ENCODE measurements at regions of chr13 and their contacts with region 1.

Region 1: GRCh38 chr13:40666045-40666904 is at the start of gene FOXO1:
- DNase-seq: peak; percentile 94
- ATAC-seq: peak; percentile 69
- H3K4me3 ChIP-seq: peak within 1 kb of the TSS; percentile 67 to 95 (median 84)
- H3K4me3 Mint-ChIP-seq: peak within 1 kb of the TSS; percentile 97
- H3K27ac ChIP-seq: peak within 1 kb of the TSS; percentile 77 to 91
- H3K27ac Mint-ChIP-seq: peak within 1 kb of the TSS; percentile 98
- H3K4me1 ChIP-seq: peaks cover 30 to 32% of the 10 kb centered on the region in 2 donors
- H3K4me1 Mint-ChIP-seq: peaks cover 38% of the 10 kb centered on the region
- H3K27me3 ChIP-seq: no peaks in the 10 kb centered on the region
- H3K27me3 Mint-ChIP-seq: no peaks in the 10 kb centered on the region
- CTCF ChIP-seq: no peak
- total RNA-seq, gene FOXO1: 77.9 and 83.1 TPM in 2 replicates

Region 2: DNA sequence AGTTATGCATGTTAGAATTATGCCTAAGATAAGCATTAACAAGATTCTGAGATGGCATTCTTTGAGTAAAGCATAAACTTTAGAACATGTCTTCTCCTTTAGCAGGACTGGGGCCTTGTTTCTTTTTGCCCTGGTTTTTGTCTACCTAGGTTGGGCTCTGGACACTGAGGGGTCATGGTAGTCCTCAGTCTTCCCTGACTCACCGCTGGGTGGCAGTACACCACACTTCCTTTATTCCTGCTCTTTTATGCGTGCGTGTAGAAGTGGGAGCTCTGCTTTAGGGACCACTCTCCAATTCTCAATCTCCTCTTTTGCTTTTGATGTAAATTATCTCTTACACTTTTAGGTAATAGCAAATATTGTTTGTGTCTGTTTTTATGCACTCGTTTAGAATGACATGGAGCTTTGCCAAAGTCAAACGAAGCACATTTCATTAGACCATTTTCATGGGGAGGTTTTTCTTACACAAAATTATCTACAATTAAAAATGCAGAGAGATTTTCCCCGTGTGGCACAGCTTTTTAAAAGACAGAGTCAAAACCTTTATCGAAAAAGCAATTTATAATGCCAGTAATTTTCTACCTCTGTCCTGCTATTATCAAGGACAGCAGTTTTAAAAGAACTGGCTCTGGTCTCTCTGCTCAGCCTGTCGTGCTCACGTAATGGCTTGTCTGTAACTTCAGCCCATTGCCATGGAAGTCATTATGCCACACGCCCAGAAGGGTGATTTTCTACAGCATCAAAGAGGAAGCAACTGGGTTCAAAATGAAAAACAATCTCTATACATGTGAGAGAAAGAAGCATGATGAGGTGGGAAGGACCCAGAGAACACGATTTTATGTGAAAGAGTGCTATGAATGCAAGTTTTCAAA is 596.9 kb before region 1 on chr13:
- CTCF ChIA-PET with region 1: interaction called, 27 read pairs
- POLR2A ChIA-PET with region 1: interaction called, 4 read pairs
- intact Hi-C with region 1: loop called (anchors 5 kb)
- DNase-seq: peak; percentile 79
- ATAC-seq: peak; percentile 95
- H3K4me3 ChIP-seq: no peak overlapping the region
- H3K4me3 Mint-ChIP-seq: no peak overlapping the region
- H3K27ac ChIP-seq: no peak overlapping the region
- H3K27ac Mint-ChIP-seq: no peak overlapping the region
- H3K4me1 ChIP-seq: peaks cover 10 to 13% of the 10 kb centered on the region in 2 donors
- H3K4me1 Mint-ChIP-seq: peaks cover 11% of the 10 kb centered on the region
- H3K27me3 ChIP-seq: no peaks in the 10 kb centered on the region
- H3K27me3 Mint-ChIP-seq: no peaks in the 10 kb centered on the region
- CTCF ChIP-seq: peak; percentile 82

Region 3: GRCh38 chr13:40401911-40402776 is 264.1 kb before region 1 on chr13:
- CTCF ChIA-PET with region 1: no interaction called
- POLR2A ChIA-PET with region 1: interaction called, 9 read pairs
- intact Hi-C with region 1: loop called (anchors 1 kb)
- DNase-seq: peak; percentile 56
- ATAC-seq: peak; percentile 99
- H3K4me3 ChIP-seq: peak overlapping the region in 3 of 5 experiments; percentile 16 to 33 (median 32)
- H3K4me3 Mint-ChIP-seq: peak overlapping the region; percentile 75
- H3K27ac ChIP-seq: no peak overlapping the region
- H3K27ac Mint-ChIP-seq: peak overlapping the region; percentile 75
- H3K4me1 ChIP-seq: peaks cover 15 to 18% of the 10 kb centered on the region in 2 donors
- H3K4me1 Mint-ChIP-seq: peaks cover 29% of the 10 kb centered on the region
- H3K27me3 ChIP-seq: no peaks in the 10 kb centered on the region
- H3K27me3 Mint-ChIP-seq: no peaks in the 10 kb centered on the region
- CTCF ChIP-seq: no peak

Region 4: DNA sequence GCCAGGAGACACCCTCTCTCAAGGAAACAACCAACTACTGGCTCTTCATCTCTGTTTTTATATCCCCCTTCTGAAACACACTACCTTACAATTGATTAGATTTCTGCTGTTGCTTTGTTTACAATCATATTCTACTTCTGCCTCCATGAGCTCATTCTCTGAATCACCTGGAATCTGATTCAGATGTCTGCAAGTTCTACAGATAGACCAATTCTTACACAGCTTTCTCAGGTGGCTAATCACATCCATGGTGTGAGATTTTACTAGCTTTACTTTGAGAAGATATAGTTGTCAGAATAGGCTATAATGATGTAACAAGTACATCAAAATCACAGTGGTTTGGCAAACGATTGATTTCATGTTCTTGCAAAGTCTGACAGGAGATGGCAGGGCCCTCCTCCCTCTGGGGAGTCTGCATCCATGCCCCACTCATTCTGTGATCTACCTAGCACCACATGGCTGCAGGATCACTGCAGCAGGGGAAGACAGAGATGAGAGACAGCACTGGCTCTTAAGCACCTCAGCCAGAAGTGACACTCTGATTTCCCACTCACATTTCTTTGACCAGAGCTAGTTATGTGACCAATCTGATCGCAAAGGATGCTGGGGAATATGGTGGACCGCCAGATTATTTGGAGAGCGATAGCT is 243.6 kb before region 1 on chr13:
- CTCF ChIA-PET with region 1: no interaction called
- POLR2A ChIA-PET with region 1: no interaction called
- intact Hi-C with region 1: no loop called
- DNase-seq: no peak
- ATAC-seq: no peak
- H3K4me3 ChIP-seq: no peak overlapping the region
- H3K4me3 Mint-ChIP-seq: no peak overlapping the region
- H3K27ac ChIP-seq: no peak overlapping the region
- H3K27ac Mint-ChIP-seq: peak overlapping the region; percentile 4
- H3K4me1 ChIP-seq: peaks cover 9 to 21% of the 10 kb centered on the region in 2 donors
- H3K4me1 Mint-ChIP-seq: peaks cover 22% of the 10 kb centered on the region
- H3K27me3 ChIP-seq: no peaks in the 10 kb centered on the region
- H3K27me3 Mint-ChIP-seq: no peaks in the 10 kb centered on the region
- CTCF ChIP-seq: no peak

Region 5: DNA sequence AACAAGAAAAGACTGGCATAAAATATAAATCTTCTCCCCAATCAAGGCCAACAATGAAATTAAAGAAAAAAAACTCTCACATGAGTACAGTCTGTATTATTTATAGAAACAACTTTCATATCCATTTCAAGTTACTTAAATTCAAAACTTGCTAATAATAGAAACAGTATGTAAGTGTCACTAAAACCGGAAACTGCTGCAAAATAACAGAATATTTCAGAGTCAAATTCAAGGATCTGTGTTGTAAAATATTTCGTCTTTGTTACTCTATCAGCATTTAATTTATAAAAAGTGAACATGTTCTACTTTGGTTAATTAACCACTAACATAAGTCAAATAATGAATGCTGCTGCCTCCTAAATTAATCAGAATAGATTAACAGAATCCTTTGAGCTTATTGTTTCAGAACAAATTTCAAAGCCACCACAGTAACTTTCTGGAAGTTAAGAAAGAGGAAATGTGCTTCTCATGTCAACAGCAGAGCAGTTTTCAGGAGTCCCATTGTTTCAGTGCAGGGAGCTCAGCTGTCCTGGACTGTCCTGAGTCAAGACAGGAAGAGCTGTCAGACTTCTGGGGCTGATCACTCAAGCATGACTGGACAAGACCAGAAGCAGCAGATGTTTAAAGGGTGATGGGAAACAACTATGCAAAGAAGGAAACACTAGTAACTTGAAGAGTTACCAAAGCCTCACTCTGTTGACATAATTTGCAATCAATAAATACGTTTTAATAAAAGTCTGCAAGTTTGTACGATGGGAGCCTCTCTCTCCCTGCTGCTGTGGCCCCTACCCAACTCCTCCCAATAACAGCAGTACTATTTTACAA is 76.8 kb before region 1 on chr13:
- CTCF ChIA-PET with region 1: interaction called, 8 read pairs
- POLR2A ChIA-PET with region 1: interaction called, 8 read pairs
- intact Hi-C with region 1: loop called (anchors 2 kb)
- DNase-seq: peak; percentile 83
- ATAC-seq: peak; percentile 91
- H3K4me3 ChIP-seq: peak overlapping the region; percentile 12 to 58 (median 24)
- H3K4me3 Mint-ChIP-seq: peak overlapping the region; percentile 65
- H3K27ac ChIP-seq: peak overlapping the region; percentile 85 to 95
- H3K27ac Mint-ChIP-seq: peak overlapping the region; percentile 89
- H3K4me1 ChIP-seq: peaks cover 91 to 98% of the 10 kb centered on the region in 2 donors
- H3K4me1 Mint-ChIP-seq: peaks cover 94% of the 10 kb centered on the region
- H3K27me3 ChIP-seq: no peaks in the 10 kb centered on the region
- H3K27me3 Mint-ChIP-seq: no peaks in the 10 kb centered on the region
- CTCF ChIP-seq: no peak

Region 6: GRCh38 chr13:40682449-40683240 is 16.4 kb after region 1 on chr13:
- CTCF ChIA-PET with region 1: interaction called, 36 read pairs
- POLR2A ChIA-PET with region 1: no interaction called
- intact Hi-C with region 1: loop called (anchors 1 kb)
- DNase-seq: peak; percentile 55
- ATAC-seq: peak; percentile 45
- H3K4me3 ChIP-seq: no peak overlapping the region
- H3K4me3 Mint-ChIP-seq: peak overlapping the region; percentile 23
- H3K27ac ChIP-seq: no peak overlapping the region
- H3K27ac Mint-ChIP-seq: no peak overlapping the region
- H3K4me1 ChIP-seq: peaks cover 19 to 22% of the 10 kb centered on the region in 2 donors
- H3K4me1 Mint-ChIP-seq: peaks cover 19% of the 10 kb centered on the region
- H3K27me3 ChIP-seq: no peaks in the 10 kb centered on the region
- H3K27me3 Mint-ChIP-seq: no peaks in the 10 kb centered on the region
- CTCF ChIP-seq: peak; percentile 91

Region 7: DNA sequence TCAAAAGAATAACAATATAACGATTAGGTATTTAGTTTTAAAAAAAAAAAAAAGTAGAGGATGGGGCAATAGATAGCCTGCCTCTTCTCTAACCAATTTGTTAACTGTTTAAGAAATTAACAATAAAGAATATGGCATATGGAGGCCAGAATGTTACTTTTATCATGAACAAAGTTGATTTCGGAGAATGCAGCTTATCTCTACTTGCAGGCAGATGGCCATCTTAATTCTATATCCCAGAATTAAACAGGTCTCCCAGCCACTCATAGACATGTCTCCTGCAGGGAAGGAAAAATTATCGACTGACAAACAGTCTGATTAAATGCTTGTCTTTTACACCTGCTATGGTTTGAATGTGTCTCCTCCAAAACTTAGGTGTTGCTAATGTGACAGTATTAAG is 219.7 kb after region 1 on chr13:
- CTCF ChIA-PET with region 1: no interaction called
- POLR2A ChIA-PET with region 1: no interaction called
- intact Hi-C with region 1: no loop called
- DNase-seq: no peak
- ATAC-seq: no peak
- H3K4me3 ChIP-seq: no peak overlapping the region
- H3K4me3 Mint-ChIP-seq: no peak overlapping the region
- H3K27ac ChIP-seq: no peak overlapping the region
- H3K27ac Mint-ChIP-seq: no peak overlapping the region
- H3K4me1 ChIP-seq: no peaks in the 10 kb centered on the region
- H3K4me1 Mint-ChIP-seq: peaks cover 1% of the 10 kb centered on the region
- H3K27me3 ChIP-seq: no peaks in the 10 kb centered on the region
- H3K27me3 Mint-ChIP-seq: no peaks in the 10 kb centered on the region
- CTCF ChIP-seq: no peak

Region 8: GRCh38 chr13:41019011-41019487 is 352.8 kb after region 1 on chr13 and contains the start of gene ELF1:
- CTCF ChIA-PET with region 1: no interaction called
- POLR2A ChIA-PET with region 1: no interaction called
- intact Hi-C with region 1: loop called (anchors 5 kb)
- DNase-seq: peak; percentile 91
- ATAC-seq: peak; percentile 89
- H3K4me3 ChIP-seq: peak within 1 kb of the TSS; percentile 65 to 99 (median 75)
- H3K4me3 Mint-ChIP-seq: peak within 1 kb of the TSS; percentile 94
- H3K27ac ChIP-seq: peak within 1 kb of the TSS; percentile 96 to 100
- H3K27ac Mint-ChIP-seq: peak within 1 kb of the TSS; percentile 98
- H3K4me1 ChIP-seq: peaks cover 29 to 33% of the 10 kb centered on the region in 2 donors
- H3K4me1 Mint-ChIP-seq: peaks cover 52% of the 10 kb centered on the region
- H3K27me3 ChIP-seq: no peaks in the 10 kb centered on the region
- H3K27me3 Mint-ChIP-seq: no peaks in the 10 kb centered on the region
- CTCF ChIP-seq: no peak
- total RNA-seq, gene ELF1: 185 and 186 TPM in 2 replicates

Measured in B cell (primary cell).